CD8-positive, alpha-beta memory T cell (primary cell): ENCODE measurements at regions of chr22 and their contacts with region 1.

Region 1: GRCh38 chr22:41638124-41638523 is 17.0 kb downstream of the XRCC6 start:
- DNase-seq: no peak
- H3K4me3 ChIP-seq: no peak overlapping the region
- H3K4me3 Mint-ChIP-seq: no peak overlapping the region
- H3K27ac ChIP-seq: no peak overlapping the region
- H3K27ac Mint-ChIP-seq: no peak overlapping the region
- H3K4me1 ChIP-seq: no peaks in the 10 kb centered on the region
- H3K4me1 Mint-ChIP-seq: peaks cover 3 to 24% (median 21%) of the 10 kb centered on the region in 3 donors
- H3K27me3 ChIP-seq: no peaks in the 10 kb centered on the region
- H3K27me3 Mint-ChIP-seq: no peaks in the 10 kb centered on the region

Region 2: DNA sequence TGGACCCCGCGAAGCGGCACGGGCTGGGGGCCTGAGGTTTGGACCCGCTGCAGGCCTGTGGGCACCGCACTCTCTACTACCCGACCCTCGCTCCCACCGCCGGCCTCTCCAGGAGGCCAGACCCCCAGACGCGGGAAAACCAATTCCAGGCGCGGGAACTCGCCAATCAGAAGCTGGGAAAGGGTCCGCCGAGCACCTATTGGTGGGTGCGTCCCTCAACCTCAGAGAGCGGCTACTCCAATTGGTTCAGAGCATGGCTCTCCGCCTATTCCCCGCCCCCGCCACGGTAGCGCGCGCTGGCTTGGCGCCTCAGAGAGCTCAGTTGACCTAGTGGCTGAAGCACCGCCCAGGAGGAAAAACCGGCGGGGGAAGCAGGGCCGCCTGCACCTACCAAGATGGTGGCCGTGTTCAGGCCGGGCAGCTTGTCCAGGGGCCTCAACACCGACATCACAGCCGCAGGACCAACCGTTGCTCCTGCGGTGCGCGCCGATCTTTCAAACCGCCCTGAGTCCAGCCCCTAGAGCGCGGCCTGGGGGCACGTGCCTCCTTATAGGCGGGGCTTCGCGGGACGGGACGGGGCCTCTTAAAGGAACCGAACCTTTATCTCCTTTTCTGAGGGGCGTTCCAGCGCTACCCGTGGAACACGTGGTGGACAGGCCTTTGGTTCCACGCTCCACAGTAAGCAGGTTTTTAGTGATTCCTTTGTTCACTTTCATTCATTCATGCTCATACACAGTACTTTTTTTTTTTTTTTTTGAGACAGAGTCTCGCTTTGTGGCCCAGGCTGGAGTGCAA is 308.7 kb after region 1 on chr22 and contains the start of gene CENPM:
- CTCF ChIA-PET with region 1: no interaction called
- POLR2A ChIA-PET with region 1: interaction called, 12 read pairs
- DNase-seq: peak; percentile 79 to 87 (median 81)
- H3K4me3 ChIP-seq: peak within 1 kb of the TSS; percentile 89
- H3K4me3 Mint-ChIP-seq: peak within 1 kb of the TSS; percentile 89 to 97 (median 94)
- H3K27ac ChIP-seq: peak within 1 kb of the TSS; percentile 76
- H3K27ac Mint-ChIP-seq: peak within 1 kb of the TSS; percentile 32 to 92 (median 74)
- H3K4me1 ChIP-seq: peaks cover 18% of the 10 kb centered on the region
- H3K4me1 Mint-ChIP-seq: peaks cover 8 to 17% (median 10%) of the 10 kb centered on the region in 3 donors
- H3K27me3 ChIP-seq: no peaks in the 10 kb centered on the region
- H3K27me3 Mint-ChIP-seq: no peaks in the 10 kb centered on the region
- total RNA-seq, gene CENPM: 73.2 to 77.5 TPM